ENCODE measurements at regions of chr10 and their contacts with region 1.

Region 1: DNA sequence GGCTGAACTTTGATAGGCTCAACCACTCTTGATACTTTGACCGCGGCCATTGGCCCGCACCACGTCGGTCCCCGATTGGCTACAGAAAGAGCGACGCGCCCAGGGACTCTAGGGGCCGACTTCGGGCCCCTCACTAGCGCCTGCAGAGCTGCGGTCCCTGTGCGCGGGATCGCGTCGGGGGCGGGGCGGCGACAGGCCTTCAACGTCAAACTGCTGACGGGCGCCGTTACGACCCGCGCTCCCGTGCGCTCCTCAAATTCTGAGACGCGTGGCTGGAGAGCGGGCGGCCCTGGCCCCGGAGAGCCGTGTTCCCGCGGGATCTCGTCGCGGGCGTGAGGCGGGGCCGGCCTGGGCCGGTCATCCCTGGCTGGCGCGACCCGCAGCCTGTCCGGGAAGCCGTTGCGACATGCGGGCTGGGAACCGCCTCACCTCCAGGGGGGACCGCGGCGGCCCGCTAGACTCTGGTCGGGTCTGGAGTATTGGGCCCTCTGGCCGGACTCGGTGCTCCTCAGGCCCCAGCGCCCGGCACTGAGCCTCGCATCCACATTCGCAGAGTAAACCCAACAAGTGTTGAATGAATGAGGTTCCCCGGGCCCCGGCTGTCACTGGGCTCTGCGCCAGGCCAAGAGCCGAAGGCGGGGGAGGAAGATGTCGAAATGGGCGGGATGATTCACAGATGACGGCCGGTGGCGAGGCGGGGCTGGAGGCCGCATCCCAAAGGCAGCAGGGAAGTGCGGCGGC is 644 bp upstream of the SLC25A28 start:
- DNase-seq: peak; percentile 98

Region 2: GRCh38 chr10:99430451-99431189 is 190.3 kb before region 1 on chr10 and contains the start of gene GOT1:
- intact Hi-C with region 1: loop called (anchors 10 kb)
- DNase-seq: peak; percentile 98
- total RNA-seq, gene GOT1: 13.2 to 13.4 TPM

Region 3: DNA sequence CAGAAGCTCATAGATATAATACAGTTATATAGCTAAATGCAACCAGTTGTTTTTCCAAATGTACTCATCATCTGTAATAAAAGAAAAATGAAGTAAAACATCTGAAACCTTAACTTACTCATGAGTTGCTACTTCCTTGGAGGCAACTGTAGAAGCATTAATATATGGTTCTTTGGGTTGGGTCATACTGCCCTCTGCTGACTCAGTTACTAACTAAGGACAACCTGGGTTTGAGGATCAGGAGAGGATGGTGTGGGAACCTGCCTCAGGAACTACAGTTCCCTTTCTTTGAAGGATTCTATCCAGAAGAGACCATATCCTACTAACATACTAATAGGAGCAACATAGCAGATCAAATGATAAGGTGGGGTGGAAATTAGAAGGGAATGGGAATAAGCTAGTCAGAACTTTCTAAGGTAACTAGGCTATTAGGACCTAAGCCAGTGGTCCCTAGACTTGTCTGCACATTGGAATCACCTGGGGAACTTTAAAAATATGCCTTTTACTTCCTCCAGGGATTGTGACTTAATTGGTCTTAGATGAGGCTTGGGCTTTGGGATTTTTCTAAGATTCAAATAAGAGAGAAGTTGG is 90.3 kb after region 1 on chr10:
- intact Hi-C with region 1: loop called in 1 of 2 experiments (anchors 10 kb)
- DNase-seq: no peak

Measured in posterior vena cava (tissue), 2 donors.